GM13977 (cell line): ENCODE measurements at regions of chr20 and their contacts with region 1.

Region 1: GRCh38 chr20:53738039-53738944 is 144.7 kb upstream of the ZNF217 start:
- DNase-seq: no peak
- CTCF ChIP-seq: no peak

Region 2: GRCh38 chr20:53652090-53652858 is 86.0 kb before region 1 on chr20:
- in situ Hi-C with region 1: loop called (anchors 10 kb)
- DNase-seq: peak; percentile 71
- CTCF ChIP-seq: no peak

Region 3: GRCh38 chr20:53915446-53916172 is 177.3 kb after region 1 on chr20:
- in situ Hi-C with region 1: loop called (anchors 25 kb)
- DNase-seq: peak; percentile 73
- CTCF ChIP-seq: peak; percentile 82